ENCODE measurements at regions of chr16 and their contacts with region 1.

Region 1: DNA sequence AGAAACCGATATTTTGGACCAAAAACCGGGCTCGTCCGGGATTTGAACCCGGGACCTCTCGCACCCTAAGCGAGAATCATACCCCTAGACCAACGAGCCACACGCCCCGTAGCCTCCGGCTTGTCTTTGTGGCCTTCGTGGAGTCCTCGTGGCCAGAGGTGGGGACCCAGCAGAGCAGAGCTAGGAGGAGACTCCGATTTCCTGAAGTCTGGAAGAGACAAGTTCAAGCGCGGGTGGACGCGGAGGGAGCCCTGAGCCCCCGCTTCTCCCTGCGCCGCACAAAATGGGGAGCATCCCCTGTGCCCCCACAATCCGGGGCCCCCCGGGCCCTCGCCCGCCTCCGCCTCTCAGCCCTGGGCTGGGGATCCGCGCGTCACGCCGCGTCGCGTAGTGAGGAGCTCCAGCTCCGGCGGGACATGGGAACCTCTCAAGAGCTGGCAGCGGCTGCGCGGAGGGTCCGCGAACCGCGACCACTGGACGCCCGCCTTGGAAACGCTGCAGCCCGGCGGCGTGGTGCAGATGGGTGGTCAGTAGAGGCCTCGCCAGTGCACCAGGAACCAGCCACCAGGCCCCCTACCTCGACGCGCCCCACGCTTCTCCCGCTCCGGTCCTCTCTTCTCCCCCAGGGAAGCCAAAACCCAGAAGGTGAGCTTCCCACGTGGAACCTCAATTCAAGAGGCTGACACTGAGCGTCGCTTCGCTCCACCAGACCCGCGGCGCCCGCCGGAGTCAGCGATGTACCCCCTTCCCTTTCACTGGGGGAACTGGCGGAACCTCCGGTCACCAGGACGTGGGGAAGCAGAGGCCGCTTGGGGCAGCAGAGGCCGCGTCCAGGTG is 5.2 kb upstream of the OR1F1 start:
- DNase-seq: peak; percentile 74
- H3K4me3 ChIP-seq: peak overlapping the region; percentile 52 to 66
- H3K27ac ChIP-seq: no peak overlapping the region
- H3K4me1 ChIP-seq: peaks cover 0 to 11% of the 10 kb centered on the region in 2 experiments; a peak in 2 of 4 replicates
- H3K27me3 ChIP-seq: peaks cover 58% of the 10 kb centered on the region
- CTCF ChIP-seq: peak; percentile 36
- EP300 ChIP-seq: no peak
- RAD21 ChIP-seq: 0 out of 2 replicates have a peak, but pooled peaks have one; percentile 2

Region 2: DNA sequence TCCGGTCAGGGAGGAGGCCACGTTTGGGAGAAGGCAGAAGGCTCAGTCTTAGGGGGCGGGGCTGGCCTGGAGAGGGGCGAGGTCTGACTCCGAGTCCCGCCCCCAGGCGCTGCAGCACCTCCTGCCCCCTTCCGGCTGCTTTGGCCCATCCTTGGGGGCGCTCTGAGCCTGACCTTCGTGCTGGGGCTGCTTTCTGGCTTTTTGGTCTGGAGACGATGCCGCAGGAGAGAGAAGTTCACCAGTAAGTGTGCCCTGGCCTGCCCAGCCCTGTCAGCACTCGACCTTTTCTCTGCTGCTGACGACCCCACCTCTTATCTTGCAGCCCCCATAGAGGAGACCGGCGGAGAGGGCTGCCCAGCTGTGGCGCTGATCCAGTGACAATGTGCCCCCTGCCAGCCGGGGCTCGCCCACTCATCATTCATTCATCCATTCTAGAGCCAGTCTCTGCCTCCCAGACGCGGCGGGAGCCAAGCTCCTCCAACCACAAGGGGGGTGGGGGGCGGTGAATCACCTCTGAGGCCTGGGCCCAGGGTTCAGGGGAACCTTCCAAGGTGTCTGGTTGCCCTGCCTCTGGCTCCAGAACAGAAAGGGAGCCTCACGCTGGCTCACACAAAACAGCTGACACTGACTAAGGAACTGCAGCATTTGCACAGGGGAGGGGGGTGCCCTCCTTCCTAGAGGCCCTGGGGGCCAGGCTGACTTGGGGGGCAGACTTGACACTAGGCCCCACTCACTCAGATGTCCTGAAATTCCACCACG is 161.2 kb before region 1 on chr16:
- CTCF ChIA-PET with region 1: no interaction called
- POLR2A ChIA-PET with region 1: no interaction called
- DNase-seq: peak; percentile 86
- H3K4me3 ChIP-seq: peak overlapping the region; percentile 80 to 88
- H3K27ac ChIP-seq: peak overlapping the region; percentile 87 to 99
- H3K4me1 ChIP-seq: peaks cover 8 to 33% of the 10 kb centered on the region in 2 experiments; a peak in 3 of 4 replicates
- H3K27me3 ChIP-seq: no peaks in the 10 kb centered on the region
- CTCF ChIP-seq: peak; percentile 46
- EP300 ChIP-seq: peak in 1 of 2 experiments; percentile 85; a peak in 1 of 4 replicates
- RAD21 ChIP-seq: no peak

Region 3: DNA sequence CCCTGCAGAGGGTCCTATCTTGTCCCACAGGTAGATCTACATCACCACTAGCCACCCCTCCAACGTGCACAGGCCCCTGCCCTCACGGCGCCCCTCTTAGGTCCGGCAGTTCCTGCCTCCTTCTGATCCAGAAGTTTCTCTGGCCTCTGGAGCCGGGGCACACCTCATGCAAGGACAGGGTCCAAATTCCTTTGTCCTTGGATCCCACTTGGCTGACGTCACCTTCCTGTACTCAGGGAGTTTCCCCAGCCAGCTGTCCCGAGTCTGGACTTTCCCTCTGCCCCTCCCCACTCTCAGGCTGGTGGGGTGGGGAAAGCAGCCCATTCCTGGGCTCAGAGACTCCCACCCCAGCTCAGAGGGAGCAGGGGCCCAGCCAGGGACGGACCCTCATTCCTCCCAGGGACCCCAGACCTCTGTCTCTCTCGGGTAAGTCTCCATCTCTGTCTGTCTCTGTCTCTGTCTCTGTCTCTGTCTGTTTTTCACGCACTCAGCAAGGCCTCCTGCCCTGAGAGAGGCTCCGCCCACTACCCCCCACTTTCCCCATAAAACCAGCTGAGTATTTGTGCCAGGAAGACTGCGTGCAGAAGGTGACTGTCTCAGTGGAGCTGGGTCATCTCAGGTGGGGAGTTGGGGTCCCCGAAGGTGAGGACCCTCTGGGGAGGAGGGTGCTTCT is 117.6 kb before region 1 on chr16 and contains the start of gene IL32:
- CTCF ChIA-PET with region 1: no interaction called
- POLR2A ChIA-PET with region 1: no interaction called
- DNase-seq: no peak
- H3K4me3 ChIP-seq: peak within 1 kb of the TSS in 1 of 2 experiments; percentile 50; a peak in 1 of 4 replicates
- H3K27ac ChIP-seq: no peak within 1 kb of the TSS
- H3K4me1 ChIP-seq: no peaks in the 10 kb centered on the region; a peak in 1 of 4 replicates
- H3K27me3 ChIP-seq: no peaks in the 10 kb centered on the region
- CTCF ChIP-seq: no peak
- EP300 ChIP-seq: no peak
- RAD21 ChIP-seq: no peak
- polyA plus RNA-seq, gene IL32: 26.4 and 34.7 TPM in 2 replicates

Region 4: DNA sequence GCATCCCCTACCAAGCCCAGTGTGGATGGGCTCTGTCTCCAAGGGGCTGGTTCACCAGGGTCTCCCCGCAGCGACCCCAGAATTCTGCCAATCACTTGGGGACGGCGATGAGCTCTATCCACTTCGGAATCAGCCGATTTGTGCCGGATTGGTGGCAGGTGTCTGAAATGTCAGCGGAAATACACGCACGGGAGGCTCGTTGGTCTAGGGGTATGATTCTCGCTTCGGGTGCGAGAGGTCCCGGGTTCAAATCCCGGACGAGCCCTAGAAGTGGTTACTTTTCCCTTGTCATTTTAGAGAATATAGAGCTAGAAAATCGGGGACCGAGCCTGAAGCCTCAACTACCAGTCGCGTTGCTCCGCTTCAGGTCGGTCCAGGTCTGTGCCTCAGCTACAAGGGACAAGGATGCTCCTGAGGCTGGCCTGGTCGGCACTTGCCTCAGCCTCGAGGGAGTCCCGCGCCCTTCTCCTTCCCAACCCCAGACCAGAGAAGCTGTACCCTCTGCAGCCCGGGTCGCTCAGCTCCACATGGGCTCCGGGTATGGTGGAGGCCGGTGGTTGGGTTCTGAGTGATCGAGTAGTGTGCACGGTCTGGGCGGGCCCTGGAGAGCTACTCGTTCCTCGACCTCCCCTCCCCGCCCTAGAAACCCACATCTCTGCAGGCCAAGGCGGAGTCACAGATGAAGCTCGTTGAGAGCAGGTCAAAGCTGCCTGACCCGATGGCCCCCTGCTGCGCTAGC is 10.8 kb before region 1 on chr16:
- CTCF ChIA-PET with region 1: interaction called, 11 read pairs
- POLR2A ChIA-PET with region 1: no interaction called
- DNase-seq: peak; percentile 51
- H3K4me3 ChIP-seq: no peak overlapping the region; a peak in 1 of 4 replicates
- H3K27ac ChIP-seq: no peak overlapping the region
- H3K4me1 ChIP-seq: peaks cover 0 to 5% of the 10 kb centered on the region in 2 experiments; a peak in 1 of 4 replicates
- H3K27me3 ChIP-seq: peaks cover 85% of the 10 kb centered on the region
- CTCF ChIP-seq: no peak
- EP300 ChIP-seq: no peak
- RAD21 ChIP-seq: no peak